Activated naive CD4-positive, alpha-beta T cell treated with anti-CD3 and anti-CD28 coated beads, Interleukin-2, amount 10 ng/mL, durations not matched to agents 7 days and 5 days (primary cell): ENCODE measurements at regions of chr6 and their contacts with region 1.

Region 1: GRCh38 chr6:26103770-26104456 is 16.7 kb downstream of the HFE start:
- DNase-seq: peak; percentile 94
- H3K4me3 Mint-ChIP-seq: peak overlapping the region; percentile 88
- H3K27ac Mint-ChIP-seq: peak overlapping the region; percentile 100
- H3K4me1 Mint-ChIP-seq: peaks cover 30% of the 10 kb centered on the region
- H3K27me3 Mint-ChIP-seq: peaks cover 9% of the 10 kb centered on the region

Region 2: DNA sequence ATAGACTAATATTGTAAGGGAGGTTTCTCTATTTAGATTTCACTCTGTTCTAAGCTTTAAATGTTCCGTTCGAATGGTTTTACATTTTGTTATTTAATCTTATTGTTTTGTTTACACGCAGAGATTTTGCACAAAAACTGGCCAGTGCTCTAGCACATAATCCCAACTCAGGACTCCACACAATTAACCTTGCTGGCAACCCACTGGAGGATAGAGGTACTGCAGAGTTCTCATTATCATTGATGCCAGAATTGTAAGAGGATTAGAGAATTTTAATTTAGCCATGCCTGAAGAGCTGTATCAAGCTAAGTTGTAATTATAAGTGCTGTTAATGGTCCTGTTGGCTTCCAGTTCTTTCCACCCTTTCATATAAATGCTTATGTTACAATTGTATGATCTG is 631.6 kb before region 1 on chr6:
- CTCF ChIA-PET with region 1: no interaction called
- DNase-seq: no peak
- H3K4me3 Mint-ChIP-seq: no peak overlapping the region
- H3K27ac Mint-ChIP-seq: no peak overlapping the region
- H3K4me1 Mint-ChIP-seq: no peaks in the 10 kb centered on the region
- H3K27me3 Mint-ChIP-seq: no peaks in the 10 kb centered on the region

Region 3: GRCh38 chr6:26065952-26066380 is 37.9 kb before region 1 on chr6:
- CTCF ChIA-PET with region 1: interaction called, 475 read pairs
- DNase-seq: peak; percentile 66
- H3K4me3 Mint-ChIP-seq: no peak overlapping the region
- H3K27ac Mint-ChIP-seq: no peak overlapping the region
- H3K4me1 Mint-ChIP-seq: peaks cover 12% of the 10 kb centered on the region
- H3K27me3 Mint-ChIP-seq: peaks cover 33% of the 10 kb centered on the region